ENCODE measurements at regions of chr18 and their contacts with region 1.

Region 1: DNA sequence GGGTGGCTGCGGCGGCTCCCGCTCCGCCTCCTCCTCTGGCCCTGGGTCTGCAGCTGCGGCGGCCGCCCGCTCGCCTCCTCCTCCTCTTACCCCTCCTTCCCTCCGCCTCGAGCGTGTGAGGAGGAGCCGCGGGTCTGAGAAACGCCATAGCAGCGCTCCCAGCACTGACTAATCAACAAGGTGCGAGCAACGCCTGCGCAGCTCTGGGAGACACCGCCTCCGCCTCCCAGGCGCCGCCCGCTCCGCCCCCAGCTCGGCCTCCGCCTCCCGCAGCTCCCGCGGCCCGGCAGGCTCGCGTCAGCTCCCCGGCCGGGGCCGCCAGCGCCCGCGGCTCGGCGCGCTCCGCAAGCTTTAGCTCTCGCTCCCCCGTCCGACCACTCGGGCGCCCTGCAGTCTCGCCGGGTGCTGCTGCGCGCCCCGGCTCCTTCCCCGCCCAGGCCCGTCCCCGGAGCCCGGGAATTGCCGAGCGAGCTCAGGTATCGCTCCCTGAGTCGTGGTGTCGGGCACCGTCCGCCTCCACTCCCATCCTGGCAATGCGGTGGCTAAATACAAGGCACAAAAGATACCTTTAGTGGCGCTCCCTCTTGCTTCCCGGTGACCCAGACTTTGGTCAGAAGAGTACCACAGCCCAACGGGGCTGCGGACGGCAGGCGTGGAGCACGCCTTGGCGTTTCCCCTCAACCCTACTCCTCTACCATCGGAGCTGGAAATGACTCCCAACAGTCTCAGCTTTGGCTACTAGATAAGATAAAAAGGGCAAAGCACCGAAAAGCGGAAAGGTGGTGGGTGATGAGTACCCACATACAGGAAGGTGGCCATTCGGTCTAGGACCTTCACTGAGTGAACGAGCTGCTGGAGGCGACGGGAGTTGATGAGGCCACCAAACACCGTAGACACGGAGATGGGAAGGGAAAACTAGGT is at the start of gene GAREM1:
- DNase-seq: peak; percentile 97
- H3K4me3 ChIP-seq: peak within 1 kb of the TSS; percentile 83 to 86
- H3K27ac ChIP-seq: peak within 1 kb of the TSS; percentile 63 to 81; a peak in 3 of 4 replicates
- H3K4me1 ChIP-seq: peaks cover 0 to 20% of the 10 kb centered on the region in 2 experiments; a peak in 2 of 4 replicates
- H3K27me3 ChIP-seq: no peaks in the 10 kb centered on the region
- CTCF ChIP-seq: peak; percentile 60
- EP300 ChIP-seq: peak; percentile 24 to 27; a peak in 1 of 4 replicates
- RAD21 ChIP-seq: peak; percentile 76
- polyA plus RNA-seq, gene GAREM1: 2.8 and 3.3 TPM in 2 replicates

Region 2: DNA sequence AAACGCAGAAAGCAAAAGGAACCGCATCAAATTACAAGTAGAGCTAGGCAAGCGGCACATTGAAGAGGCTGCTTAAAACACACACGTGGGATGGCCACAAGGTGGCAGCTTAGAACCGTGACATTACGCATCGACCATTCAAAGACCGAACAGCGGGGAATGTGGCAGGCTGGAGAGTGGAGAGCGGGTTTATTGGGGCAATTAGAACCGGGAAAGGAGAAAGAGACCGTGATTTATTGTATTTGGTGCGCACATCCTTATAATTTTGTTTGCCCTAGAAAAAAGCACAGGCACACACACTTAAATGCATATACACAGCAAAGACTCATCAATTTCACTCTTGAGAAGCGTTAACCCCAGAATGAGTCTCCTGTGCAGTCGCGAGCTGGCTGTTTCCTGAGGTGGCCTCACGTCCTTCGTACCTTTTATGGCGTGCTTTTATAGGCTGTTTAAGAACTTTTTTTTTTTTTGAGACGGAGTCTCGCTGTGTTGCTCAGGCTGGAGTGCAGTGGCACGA is 312.8 kb before region 1 on chr18:
- CTCF ChIA-PET with region 1: interaction called, 41 read pairs
- POLR2A ChIA-PET with region 1: no interaction called
- DNase-seq: peak; percentile 76
- H3K4me3 ChIP-seq: peak overlapping the region in 1 of 2 experiments; percentile 45; a peak in 1 of 4 replicates
- H3K27ac ChIP-seq: no peak overlapping the region
- H3K4me1 ChIP-seq: no peaks in the 10 kb centered on the region; a peak in 1 of 4 replicates
- H3K27me3 ChIP-seq: no peaks in the 10 kb centered on the region
- CTCF ChIP-seq: peak; percentile 84
- EP300 ChIP-seq: no peak
- RAD21 ChIP-seq: peak; percentile 99

Region 3: GRCh38 chr18:32289483-32290075 is 181.4 kb before region 1 on chr18:
- CTCF ChIA-PET with region 1: interaction called, 68 read pairs
- POLR2A ChIA-PET with region 1: interaction called, 7 read pairs
- DNase-seq: peak; percentile 70
- H3K4me3 ChIP-seq: no peak overlapping the region
- H3K27ac ChIP-seq: no peak overlapping the region
- H3K4me1 ChIP-seq: no peaks in the 10 kb centered on the region
- H3K27me3 ChIP-seq: no peaks in the 10 kb centered on the region
- CTCF ChIP-seq: peak; percentile 88
- EP300 ChIP-seq: no peak
- RAD21 ChIP-seq: peak; percentile 81

Region 4: DNA sequence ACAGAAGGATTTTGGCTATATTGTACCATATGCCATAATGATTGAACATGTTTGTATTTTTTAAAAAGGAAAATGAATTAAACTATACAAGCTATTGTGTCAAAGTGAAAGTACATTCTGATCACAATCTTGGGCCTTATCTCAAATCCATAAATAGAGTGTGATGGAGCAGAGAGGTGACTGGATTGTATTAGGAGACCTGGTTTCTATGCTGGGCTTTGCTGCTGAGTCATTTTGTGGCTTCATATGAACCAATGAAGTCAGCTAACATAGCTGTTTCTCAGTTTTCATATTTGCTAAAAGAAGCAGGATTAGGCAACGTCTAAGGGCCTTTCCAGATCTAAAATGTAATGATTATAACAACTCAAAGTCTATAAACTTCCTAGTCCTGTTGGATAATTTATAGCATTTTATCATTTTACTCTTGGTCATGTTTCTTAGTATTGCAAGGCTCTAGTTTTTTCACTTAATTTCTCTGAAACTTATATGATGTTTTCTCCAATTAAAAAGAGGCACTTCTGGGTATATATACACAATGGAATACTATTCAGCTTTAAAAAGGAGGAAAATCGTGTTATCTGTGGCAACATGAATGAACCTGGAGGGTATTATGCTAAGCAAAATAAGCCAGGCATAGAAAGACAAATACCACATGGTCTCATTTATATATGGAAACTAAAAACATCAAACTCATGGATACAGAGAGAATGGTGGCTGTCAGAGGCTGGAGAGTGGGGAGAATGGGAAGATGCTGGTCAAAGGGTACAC is 168.8 kb before region 1 on chr18:
- CTCF ChIA-PET with region 1: interaction called, 61 read pairs
- POLR2A ChIA-PET with region 1: no interaction called
- DNase-seq: peak; percentile 26
- H3K4me3 ChIP-seq: no peak overlapping the region
- H3K27ac ChIP-seq: peak overlapping the region; percentile 72 to 86
- H3K4me1 ChIP-seq: peaks cover 19 to 25% of the 10 kb centered on the region in 2 experiments
- H3K27me3 ChIP-seq: no peaks in the 10 kb centered on the region
- CTCF ChIP-seq: no peak
- EP300 ChIP-seq: peak; percentile 74 to 80; a peak in 3 of 4 replicates
- RAD21 ChIP-seq: no peak; the same call in none of the 2 replicates

Region 5: DNA sequence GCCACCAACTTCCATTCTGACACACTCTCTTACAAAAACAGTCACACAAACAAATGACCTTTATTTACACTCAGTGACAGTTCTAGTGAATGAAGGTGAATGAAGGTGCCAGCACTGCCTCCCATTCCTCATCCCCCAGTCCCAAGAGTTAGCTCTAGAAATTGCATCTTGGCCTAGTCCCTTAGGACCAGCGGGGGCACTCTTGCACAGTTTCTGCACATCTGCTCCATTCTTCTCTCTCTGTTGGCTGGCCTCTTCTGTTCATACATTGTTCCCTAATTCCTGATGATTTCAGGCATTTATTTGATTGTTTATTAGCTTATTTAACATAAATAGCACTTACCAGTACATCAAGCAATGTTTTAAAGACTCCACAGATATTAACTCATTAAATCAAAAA is 31.2 kb before region 1 on chr18:
- CTCF ChIA-PET with region 1: interaction called, 33 read pairs
- POLR2A ChIA-PET with region 1: no interaction called
- DNase-seq: no peak
- H3K4me3 ChIP-seq: no peak overlapping the region
- H3K27ac ChIP-seq: no peak overlapping the region
- H3K4me1 ChIP-seq: peaks cover 0 to 12% of the 10 kb centered on the region in 2 experiments; a peak in 2 of 4 replicates
- H3K27me3 ChIP-seq: no peaks in the 10 kb centered on the region
- CTCF ChIP-seq: peak; percentile 46; the same call in 1 of the 2 replicates
- EP300 ChIP-seq: no peak
- RAD21 ChIP-seq: peak; percentile 57

Region 6: GRCh38 chr18:32450874-32451273 is 20.1 kb before region 1 on chr18:
- CTCF ChIA-PET with region 1: interaction called, 18 read pairs
- POLR2A ChIA-PET with region 1: no interaction called
- DNase-seq: no peak
- H3K4me3 ChIP-seq: no peak overlapping the region
- H3K27ac ChIP-seq: no peak overlapping the region
- H3K4me1 ChIP-seq: peaks cover 0 to 3% of the 10 kb centered on the region in 2 experiments; a peak in 2 of 4 replicates
- H3K27me3 ChIP-seq: no peaks in the 10 kb centered on the region
- CTCF ChIP-seq: no peak
- EP300 ChIP-seq: no peak
- RAD21 ChIP-seq: no peak

Region 7: DNA sequence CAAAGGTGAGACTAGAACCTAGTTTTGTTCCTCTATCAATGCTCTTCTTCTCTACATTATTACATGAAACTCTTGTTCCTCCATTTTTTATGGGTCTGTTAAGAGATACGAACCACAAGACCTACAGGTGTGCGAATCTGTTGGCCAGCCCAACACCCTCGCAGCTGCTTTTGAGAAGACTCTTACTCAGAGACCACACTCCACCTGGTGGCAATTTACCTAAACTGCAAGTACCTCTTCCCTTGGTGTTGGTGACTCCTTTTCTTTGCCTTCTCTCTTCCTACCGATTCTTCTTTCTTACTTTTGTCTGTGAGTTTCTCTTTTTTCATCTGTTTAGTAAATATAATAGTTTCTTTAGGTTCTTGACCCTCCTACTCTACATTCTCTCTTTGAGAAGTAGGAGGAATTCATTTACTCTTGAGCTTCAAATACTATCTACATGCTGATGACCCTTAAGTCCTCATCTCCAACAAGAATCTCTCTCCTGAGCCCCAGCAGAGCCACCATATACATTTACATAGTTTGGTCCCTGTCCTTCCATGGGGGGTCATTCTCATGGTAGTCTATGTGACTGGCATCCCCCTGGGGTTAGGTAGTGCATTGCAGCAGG is 81.6 kb after region 1 on chr18:
- CTCF ChIA-PET with region 1: interaction called, 27 read pairs
- POLR2A ChIA-PET with region 1: no interaction called
- DNase-seq: peak; percentile 51
- H3K4me3 ChIP-seq: no peak overlapping the region; a peak in 1 of 4 replicates
- H3K27ac ChIP-seq: no peak overlapping the region
- H3K4me1 ChIP-seq: no peaks in the 10 kb centered on the region
- H3K27me3 ChIP-seq: no peaks in the 10 kb centered on the region
- CTCF ChIP-seq: peak; percentile 62
- EP300 ChIP-seq: no peak
- RAD21 ChIP-seq: peak; percentile 78

Measured in SK-N-SH (cell line).